G401 (cell line): ENCODE measurements at regions of chr15 and their contacts with region 1.

Region 1: DNA sequence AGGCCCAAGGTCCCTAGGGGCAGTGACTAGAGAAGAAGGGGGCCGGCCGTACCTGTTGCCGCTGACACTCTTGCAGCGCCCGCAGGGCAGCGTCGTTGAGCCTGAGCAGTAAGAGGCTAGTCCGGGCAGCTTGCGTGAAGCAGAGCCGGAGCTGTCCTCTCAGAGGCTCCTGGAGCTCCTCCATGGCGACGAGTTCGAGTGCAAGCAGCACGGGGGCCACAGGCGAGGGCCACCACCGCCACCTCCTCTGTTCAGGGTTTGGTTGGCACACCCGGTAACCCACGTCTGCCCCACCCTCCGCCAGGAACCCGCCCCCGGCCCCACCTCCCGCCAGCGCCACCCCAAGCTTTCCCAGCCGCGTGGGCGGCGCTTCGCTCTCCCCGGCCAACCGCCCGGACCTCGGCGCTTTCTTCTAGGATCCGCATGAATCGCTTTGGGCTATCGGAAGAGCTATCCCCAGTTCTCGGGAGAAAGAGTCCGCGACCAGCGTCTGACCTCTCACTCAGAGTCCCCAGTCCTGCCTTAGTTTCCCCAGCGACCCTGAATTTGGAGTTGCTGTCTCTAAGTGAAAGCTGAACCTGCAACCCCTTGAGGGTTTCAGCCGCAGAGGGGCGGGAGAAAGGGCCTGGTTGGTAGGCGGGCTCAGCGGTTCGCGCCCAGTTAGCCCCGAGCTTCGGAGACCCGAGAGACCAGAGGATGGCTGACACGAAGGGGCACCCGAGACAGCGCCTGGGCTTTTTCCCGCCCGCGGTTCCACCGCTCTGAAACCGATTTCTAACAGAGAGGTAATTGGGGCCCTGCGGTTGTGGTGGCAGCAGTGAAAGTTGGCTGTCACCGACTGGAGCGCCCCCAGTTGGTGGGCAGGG is at the start of gene ELL3:
- DNase-seq: peak; percentile 75
- total RNA-seq, gene ELL3: 44.6 and 51.2 TPM in 2 replicates

Region 2: DNA sequence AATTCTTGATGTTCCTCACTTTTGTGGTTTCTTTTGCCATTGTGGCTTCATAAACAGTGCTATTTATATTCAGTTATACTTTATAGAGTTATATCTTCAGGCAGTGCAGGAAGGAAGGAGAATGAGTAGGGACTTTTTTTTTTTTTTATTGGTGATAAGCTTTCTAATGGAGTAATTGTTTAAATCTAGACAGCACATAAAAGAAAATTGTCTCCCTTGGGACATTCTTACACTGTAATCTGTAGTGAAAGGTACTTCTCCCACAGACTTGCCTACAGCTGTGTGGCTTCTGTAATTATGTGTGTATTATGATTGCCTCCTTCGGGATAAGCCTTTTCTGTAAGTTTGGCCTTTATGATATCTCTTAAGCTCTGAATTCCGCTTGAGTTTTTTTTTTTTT is 91.5 kb after region 1 on chr15:
- in situ Hi-C with region 1: loop called (anchors 10 kb)
- DNase-seq: no peak